Aorta (tissue), 5 donors: ENCODE measurements at regions of chr16 and their contacts with region 1.

Region 1: DNA sequence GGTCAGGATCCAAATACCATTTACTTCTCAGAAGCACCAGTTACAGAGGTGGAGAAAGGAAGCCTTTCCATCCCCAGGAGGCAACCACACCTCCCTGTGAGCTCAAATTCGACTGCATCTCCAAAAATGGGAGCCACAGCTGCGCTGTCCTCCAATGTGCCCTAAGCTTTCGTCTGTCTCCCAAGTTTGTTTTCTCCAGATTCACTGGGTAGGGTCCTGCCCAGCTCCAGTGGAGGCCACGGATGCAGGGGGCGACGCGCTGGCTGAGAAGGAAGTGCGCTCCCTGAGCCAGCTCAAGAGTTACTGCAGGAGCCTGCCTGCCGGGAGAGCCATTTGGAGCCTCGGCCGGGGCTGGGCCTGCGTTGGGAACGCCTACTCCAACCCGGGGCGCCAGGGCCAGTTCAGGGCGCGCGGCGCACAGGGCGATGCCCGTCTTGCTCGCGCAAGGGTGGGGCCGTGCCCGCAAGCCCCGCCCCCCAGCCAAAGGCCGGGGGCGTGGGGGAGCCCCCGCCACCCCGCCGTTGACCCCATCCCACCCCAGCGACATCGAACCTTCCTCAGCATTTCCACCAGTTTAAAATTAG is 19.5 kb downstream of the SIAH1 start:
- DNase-seq: peak; percentile 95 to 97
- ATAC-seq: peak; percentile 97
- H3K4me3 ChIP-seq: peak overlapping the region; percentile 43 to 67
- H3K27ac ChIP-seq: peak overlapping the region; percentile 19 to 31
- H3K4me1 ChIP-seq: peaks cover 0 to 6% of the 10 kb centered on the region in 2 donors
- H3K27me3 ChIP-seq: no peaks in the 10 kb centered on the region

Region 2: GRCh38 chr16:48276102-48276501 is 89.6 kb before region 1 on chr16:
- intact Hi-C with region 1: loop called in 1 of 2 experiments (anchors 10 kb)
- DNase-seq: no peak
- ATAC-seq: no peak
- H3K4me3 ChIP-seq: no peak overlapping the region
- H3K27ac ChIP-seq: no peak overlapping the region
- H3K4me1 ChIP-seq: peaks cover 0 to 5% of the 10 kb centered on the region in 2 donors
- H3K27me3 ChIP-seq: no peaks in the 10 kb centered on the region

Region 3: DNA sequence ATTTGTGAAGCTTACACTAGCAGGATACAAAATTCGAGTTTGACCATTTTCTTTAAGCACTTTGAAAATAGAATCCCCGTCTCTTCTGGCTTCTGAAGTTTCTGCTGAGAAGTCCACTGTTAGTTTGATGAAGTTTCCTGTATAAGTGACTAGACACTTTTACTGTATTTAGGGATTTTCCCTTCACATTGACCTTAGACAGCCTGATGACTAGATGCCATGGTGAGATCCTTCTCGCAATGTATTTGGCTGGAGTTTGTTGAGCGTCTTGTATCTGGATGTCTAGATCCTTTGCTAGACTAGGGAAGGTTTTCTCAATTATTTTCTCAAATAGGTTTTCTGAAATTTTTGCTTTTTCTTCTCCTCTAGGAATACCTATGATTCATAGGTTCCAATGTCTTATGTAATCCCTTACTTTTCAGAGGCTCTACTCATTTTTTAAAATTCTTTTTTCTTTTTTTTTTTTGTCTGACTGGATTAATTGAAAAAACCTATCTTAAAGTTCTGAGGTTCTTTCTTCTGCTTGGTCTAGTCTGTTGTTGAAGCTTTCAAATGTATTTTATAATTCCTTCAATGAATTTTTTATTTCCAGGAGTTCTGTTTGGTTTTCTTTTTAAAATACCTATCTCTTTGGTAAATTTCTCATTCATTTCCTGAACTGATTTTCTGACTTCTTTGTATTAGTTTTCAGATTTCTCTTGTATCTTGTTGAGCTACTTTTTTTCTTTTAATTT is 54.6 kb before region 1 on chr16:
- intact Hi-C with region 1: no loop called
- DNase-seq: no peak
- ATAC-seq: no peak
- H3K4me3 ChIP-seq: no peak overlapping the region
- H3K27ac ChIP-seq: no peak overlapping the region
- H3K4me1 ChIP-seq: peaks cover 0 to 1% of the 10 kb centered on the region in 2 donors
- H3K27me3 ChIP-seq: no peaks in the 10 kb centered on the region

Region 4: DNA sequence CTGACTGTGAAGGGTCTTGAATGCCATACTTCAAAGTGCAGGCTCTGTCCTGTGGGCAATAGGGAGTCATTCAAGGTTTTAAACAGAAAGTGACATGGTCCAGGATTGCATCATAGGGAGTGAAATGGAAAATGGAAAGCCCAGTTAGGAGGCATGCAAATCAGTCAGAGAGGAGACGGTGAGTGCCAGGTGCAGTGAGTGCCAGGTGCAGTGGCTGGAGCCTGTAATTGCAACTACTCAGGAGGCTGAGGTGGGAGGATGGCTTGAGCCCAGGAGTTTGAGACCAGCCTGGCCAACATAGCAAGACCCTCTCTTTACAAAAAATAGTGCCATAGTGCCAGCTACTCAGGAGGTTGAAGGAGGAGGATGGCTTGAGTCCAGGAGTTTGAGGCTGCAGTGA is 54.8 kb after region 1 on chr16:
- intact Hi-C with region 1: no loop called
- DNase-seq: no peak
- ATAC-seq: no peak
- H3K4me3 ChIP-seq: no peak overlapping the region
- H3K27ac ChIP-seq: no peak overlapping the region
- H3K4me1 ChIP-seq: no peaks in the 10 kb centered on the region
- H3K27me3 ChIP-seq: no peaks in the 10 kb centered on the region

Region 5: DNA sequence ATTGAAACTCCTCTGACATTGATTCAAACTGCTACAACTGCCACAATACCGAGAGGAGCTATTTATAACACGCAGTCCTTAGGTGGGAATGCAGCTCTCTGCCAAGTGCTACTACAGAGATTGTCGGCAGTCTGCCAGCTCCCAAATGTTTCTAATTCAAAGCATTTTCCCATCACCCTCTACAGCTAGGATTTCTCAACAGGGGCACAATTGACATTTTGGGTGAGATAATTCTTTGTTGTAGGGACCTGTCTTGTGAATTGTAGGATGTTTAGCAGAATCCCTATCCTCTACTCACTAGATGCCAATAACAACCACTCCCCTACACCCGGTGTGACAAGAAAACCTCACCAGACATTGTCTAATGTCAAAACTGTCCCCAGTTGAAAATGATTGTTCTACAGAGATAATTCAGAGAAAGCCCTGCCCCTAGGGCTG is 252.1 kb after region 1 on chr16:
- intact Hi-C with region 1: loop called in 1 of 2 experiments (anchors 5 kb)
- DNase-seq: peak in 1 of 2 donors; percentile 69
- ATAC-seq: no peak
- H3K4me3 ChIP-seq: no peak overlapping the region
- H3K27ac ChIP-seq: peak overlapping the region in 1 of 2 donors; percentile 3
- H3K4me1 ChIP-seq: peaks cover 0 to 6% of the 10 kb centered on the region in 2 donors
- H3K27me3 ChIP-seq: no peaks in the 10 kb centered on the region